Activated CD4-positive, alpha-beta T cell treated with anti-CD3 and anti-CD28 coated beads, Interleukin-2, amount 10 ng/mL, durations not matched to agents 7 days and 5 days (primary cell): ENCODE measurements at regions of chr22 and their contacts with region 1.

Region 1: DNA sequence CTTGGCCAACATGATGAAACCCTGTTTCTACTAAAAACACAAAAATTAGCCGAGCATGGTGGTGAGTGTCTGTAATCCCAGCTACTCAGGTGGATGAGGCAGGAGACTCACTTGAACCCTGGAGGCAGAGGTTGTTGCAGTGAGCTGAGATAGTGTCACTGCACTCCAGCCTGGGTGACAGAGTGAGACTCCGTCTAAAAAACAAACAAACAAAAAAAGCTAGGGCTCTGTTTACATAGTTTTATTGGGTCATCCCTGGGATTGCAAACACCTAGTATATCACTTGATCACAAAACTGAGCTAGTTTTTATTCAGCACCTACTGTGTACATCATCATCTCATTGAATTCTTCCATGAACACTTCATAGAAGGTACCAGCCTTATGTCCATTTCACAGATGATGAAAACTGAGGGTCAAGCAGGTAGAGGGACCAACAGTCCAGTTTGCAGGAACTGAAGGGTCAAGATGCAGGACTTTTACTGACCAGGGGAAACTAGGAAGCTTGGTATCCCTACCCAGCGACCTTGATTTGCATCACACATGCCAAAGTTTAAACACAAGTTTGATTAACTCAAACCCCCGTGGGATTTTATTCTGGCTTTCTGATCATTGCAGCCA is 9.2 kb upstream of the MRTFA start:
- DNase-seq: no peak
- H3K4me3 Mint-ChIP-seq: no peak overlapping the region
- H3K27ac Mint-ChIP-seq: peak overlapping the region; percentile 31
- H3K4me1 Mint-ChIP-seq: peaks cover 21% of the 10 kb centered on the region
- H3K27me3 Mint-ChIP-seq: no peaks in the 10 kb centered on the region

Region 2: DNA sequence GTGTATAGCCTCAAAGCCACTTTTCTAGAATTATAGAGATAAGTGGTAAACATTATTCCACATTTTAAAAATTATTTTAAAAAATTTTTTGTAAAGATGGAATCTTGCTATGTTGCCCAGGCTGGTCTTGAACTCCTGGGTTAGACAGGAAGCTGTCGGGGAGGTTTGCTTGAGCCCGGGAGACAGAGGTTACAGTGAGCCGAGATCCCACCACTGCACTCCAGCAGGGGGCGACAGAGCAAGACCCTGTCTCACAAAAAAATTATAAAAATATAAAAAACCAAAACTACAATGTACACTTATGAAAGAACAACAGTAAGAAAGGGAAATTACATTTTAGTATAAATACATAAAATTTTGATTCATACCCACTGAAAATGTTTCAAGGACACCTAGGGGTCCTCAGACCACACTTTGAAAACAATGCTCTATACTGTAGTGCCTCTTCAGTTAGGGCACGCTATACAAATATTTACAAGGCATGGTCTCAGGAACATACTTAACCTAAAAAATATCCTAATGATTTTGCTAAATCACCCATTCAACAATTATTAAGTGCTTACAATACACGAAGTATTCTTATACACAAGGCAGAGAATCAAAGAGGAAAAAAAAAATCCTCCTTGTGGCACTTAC is 120.3 kb before region 1 on chr22:
- CTCF ChIA-PET with region 1: interaction called, 15 read pairs
- POLR2A ChIA-PET with region 1: interaction called, 14 read pairs
- DNase-seq: peak; percentile 76
- H3K4me3 Mint-ChIP-seq: no peak overlapping the region
- H3K27ac Mint-ChIP-seq: no peak overlapping the region
- H3K4me1 Mint-ChIP-seq: peaks cover 42% of the 10 kb centered on the region
- H3K27me3 Mint-ChIP-seq: no peaks in the 10 kb centered on the region

Region 3: GRCh38 chr22:40616578-40616977 is 29.1 kb before region 1 on chr22:
- CTCF ChIA-PET with region 1: no interaction called
- POLR2A ChIA-PET with region 1: no interaction called
- DNase-seq: no peak
- H3K4me3 Mint-ChIP-seq: no peak overlapping the region
- H3K27ac Mint-ChIP-seq: no peak overlapping the region
- H3K4me1 Mint-ChIP-seq: peaks cover 9% of the 10 kb centered on the region
- H3K27me3 Mint-ChIP-seq: no peaks in the 10 kb centered on the region